Aorta (tissue), 5 donors: ENCODE measurements at regions of chr1 and their contacts with region 1.

Region 1: DNA sequence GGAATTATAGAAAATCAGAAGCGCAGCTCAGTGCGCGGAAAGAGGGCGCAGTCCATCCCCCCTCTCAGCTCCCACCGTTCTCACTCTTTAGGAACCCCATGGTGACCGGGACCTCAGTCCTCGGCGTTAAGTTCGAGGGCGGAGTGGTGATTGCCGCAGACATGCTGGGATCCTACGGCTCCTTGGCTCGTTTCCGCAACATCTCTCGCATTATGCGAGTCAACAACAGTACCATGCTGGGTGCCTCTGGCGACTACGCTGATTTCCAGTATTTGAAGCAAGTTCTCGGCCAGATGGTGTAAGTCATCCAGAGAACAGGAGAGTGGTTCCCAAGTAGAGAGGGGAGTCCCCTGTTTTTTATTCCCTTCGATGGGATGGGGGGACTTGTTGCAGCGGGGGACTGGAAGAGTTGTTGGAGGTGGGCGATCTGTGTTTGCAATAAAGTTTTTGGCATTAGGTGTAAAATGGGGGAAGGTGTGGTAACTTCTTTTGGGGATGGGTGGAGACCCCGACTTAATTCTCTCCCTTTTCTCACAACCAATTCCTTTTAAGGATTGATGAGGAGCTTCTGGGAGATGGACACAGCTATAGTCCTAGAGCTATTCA is 620 bp downstream of the PSMB4 start:
- DNase-seq: no peak
- ATAC-seq: peak; percentile 21
- H3K4me3 ChIP-seq: peak overlapping the region; percentile 39 to 95
- H3K27ac ChIP-seq: peak overlapping the region; percentile 31 to 93
- H3K4me1 ChIP-seq: peaks cover 0 to 3% of the 10 kb centered on the region in 2 donors
- H3K27me3 ChIP-seq: no peaks in the 10 kb centered on the region

Region 2: DNA sequence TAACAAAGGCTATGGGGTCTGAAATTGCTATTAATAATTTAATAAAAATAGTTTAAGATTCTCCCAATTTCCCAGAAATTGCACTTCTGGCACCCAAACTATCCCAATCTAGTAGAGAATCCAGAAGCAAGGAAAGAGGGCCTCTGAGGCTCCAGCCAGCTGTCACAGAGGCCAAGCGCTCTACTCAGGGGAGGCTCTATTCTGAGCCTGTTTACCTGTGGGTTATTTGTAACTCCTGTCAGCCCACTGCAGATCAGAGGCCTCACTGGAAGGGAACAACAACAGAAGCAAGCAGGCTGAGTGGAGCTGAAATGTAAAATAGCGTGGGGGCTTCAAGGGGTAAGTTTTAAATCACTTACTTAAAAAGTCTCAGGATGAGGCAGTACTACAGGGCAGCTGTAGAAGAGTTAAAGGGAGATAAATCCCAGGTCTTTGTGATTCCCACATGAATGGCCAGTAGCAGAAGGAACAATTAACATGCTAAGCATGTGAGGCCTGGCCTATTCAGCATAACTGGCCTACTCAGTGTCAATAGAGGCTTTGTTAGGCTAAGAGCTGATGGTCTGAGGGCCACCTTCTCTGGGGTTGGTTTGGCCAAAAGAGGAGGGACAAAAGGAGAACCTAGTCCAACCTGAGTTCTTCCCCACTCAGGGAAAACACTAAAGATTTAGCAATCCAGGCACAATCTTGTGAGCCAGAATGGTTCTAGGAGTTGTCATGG is 105.1 kb before region 1 on chr1:
- intact Hi-C with region 1: loop called in 1 of 2 experiments (anchors 5 kb)
- DNase-seq: no peak
- ATAC-seq: no peak
- H3K4me3 ChIP-seq: no peak overlapping the region
- H3K27ac ChIP-seq: no peak overlapping the region
- H3K4me1 ChIP-seq: no peaks in the 10 kb centered on the region
- H3K27me3 ChIP-seq: no peaks in the 10 kb centered on the region

Region 3: DNA sequence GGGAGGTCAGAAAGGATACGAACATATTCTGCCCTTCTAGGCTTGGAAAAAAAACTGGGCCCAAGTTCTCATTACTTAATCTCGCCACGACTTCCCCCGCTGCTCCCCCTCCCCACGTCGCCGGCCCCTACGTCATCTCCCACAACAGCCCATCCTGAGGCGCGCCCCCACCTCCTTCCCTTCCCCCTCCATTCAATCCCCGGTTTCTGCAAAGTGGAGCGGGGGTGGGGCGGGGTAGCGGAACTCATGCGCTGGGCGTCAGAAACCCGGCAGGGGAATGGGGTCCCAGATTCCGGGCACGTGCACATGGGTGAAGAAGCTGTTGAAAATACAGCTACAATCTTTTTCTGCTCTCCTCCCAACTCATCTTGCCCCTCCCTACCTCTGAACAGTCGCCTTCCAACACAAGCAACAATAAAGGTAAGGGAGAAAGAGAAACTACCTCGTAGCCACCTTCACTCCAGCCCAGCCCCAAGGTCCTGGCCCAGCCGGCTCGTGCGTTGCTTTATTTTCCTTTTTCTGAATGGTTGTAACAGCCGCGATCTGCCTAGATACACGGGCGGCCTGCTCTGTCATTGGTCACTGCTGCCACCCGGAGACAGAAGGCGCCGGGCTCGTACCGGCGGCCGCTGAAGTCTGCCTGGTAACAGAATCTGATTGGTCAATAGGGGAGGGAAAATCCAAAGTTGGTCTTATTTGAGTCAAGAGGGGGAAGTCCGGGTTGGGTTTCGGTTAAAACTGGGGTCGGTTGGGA is 53.0 kb before region 1 on chr1 and contains the start of gene RFX5:
- intact Hi-C with region 1: loop called (anchors 2 to 5 kb)
- DNase-seq: peak; percentile 96 to 97
- ATAC-seq: peak; percentile 99
- H3K4me3 ChIP-seq: peak within 1 kb of the TSS; percentile 63 to 91
- H3K27ac ChIP-seq: peak within 1 kb of the TSS; percentile 6 to 73
- H3K4me1 ChIP-seq: peaks cover 0 to 3% of the 10 kb centered on the region in 2 donors
- H3K27me3 ChIP-seq: no peaks in the 10 kb centered on the region
- total RNA-seq, gene RFX5: 38.0 to 51.6 TPM

Region 4: DNA sequence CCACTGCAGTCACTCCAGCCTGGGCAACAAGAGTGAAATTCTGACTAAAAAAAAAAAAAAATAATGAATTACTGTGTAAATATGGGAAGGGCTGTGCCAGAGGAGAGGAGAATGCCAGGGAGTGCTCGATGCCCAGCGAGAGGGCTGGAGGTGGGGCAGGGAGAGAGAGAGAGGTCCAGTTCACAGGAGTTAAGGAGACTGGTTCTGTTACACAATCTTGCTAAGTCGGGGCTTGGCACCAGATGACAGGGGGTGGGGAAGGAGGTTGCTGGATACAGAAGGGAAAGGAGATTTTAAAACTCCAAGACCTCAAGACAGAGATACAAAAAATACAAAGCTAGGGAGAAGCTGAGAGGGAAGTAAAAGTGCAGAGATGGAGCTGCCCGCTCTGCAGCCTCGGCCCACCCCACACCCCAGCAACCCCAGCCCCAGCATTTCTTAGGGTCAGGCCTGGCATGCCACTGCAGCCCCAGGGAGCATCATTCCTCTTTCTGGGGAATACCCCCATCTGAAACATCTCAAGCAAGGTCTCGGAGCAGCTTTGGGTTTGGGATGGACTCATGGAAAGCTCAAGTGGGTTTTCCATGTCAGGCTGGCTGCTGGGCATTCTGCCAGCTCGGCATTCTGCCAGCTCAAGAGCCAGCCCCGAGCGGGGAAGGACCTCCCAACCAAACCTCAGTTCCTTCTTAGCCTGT is 28.5 kb before region 1 on chr1:
- intact Hi-C with region 1: loop called in 1 of 2 experiments (anchors 1 kb)
- DNase-seq: peak; percentile 85 to 88
- ATAC-seq: peak; percentile 83
- H3K4me3 ChIP-seq: peak overlapping the region; percentile 33 to 66
- H3K27ac ChIP-seq: peak overlapping the region in 1 of 2 donors; percentile 91
- H3K4me1 ChIP-seq: no peaks in the 10 kb centered on the region
- H3K27me3 ChIP-seq: no peaks in the 10 kb centered on the region